K562 (cell line): ENCODE measurements at regions of chr10 and their contacts with region 1.

Region 1: DNA sequence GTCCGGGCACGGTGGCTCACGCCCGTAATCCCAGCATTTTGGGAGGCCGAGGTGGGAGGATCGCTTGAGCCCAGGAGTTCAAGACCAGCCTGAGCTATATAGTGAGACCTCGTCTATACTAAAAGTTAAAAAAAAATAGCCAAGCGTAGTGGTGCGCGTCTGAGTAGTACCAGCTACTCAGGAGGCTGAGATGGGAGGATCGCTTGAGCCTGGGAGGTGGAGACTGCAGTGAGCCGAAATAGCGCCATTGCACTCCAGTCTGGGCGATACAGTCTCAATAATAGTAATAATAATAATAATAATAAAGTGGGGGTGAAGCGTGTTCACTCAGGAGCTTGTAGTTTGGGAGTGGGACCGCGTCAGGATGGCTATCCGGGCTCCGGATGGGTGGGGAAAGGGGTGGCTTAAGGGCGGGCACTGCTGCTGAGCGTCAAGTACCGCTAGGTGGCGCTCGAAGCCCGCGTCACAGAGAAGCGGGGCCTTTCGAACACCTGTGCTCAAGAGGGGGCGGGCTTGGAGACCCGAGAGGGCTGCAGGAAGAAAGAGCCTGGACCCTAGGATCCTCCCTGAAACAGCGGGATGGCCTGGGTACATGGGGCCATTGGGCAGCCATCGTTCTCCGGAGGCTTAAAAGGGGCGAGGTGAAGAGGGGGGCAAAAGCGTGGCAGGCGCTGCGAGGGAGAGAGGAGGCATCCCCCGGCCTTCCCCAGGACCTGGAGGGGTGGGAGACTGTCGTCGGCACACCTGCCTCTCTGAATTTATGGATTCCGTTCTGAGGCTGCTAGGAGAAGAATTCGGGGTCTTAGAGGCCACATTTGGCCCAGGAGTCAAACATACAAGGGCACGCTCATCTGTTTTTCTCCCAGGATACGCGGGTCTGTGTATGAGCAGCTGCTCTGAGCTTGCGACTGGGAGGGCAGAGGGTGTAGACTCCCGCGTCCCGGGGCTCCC is 14.5 kb downstream of the LBX1 start:
- DNase-seq: peak; percentile 66 to 76 (median 74)
- ATAC-seq: peak; percentile 92
- H3K4me3 ChIP-seq: no peak overlapping the region
- H3K27ac ChIP-seq: no peak overlapping the region
- H3K4me1 ChIP-seq: peaks cover 0 to 41% of the 10 kb centered on the region in 2 experiments; a peak in 3 of 5 replicates
- H3K27me3 ChIP-seq: peaks cover 12 to 60% of the 10 kb centered on the region in 2 experiments; a peak in 4 of 5 replicates
- CTCF ChIP-seq: peak; percentile 70 to 86 (median 77)
- EP300 ChIP-seq: no peak
- POLR2A ChIP-seq: no peak
- RAD21 ChIP-seq: peak; percentile 50 to 68

Region 2: GRCh38 chr10:100986952-100987750 is 227.6 kb before region 1 on chr10 and contains the starts of genes MRPL43 and TWNK:
- CTCF ChIA-PET with region 1: no interaction called
- POLR2A ChIA-PET with region 1: no interaction called
- in situ Hi-C with region 1: no loop called
- intact Hi-C with region 1: no loop called
- DNase-seq: peak; percentile 78 to 87 (median 82)
- ATAC-seq: peak; percentile 96
- H3K4me3 ChIP-seq: peak within 1 kb of the TSS; percentile 95
- H3K27ac ChIP-seq: peak within 1 kb of the TSS; percentile 87
- H3K4me1 ChIP-seq: peaks cover 16 to 21% of the 10 kb centered on the region in 2 experiments; a peak in 4 of 5 replicates
- H3K27me3 ChIP-seq: no peaks in the 10 kb centered on the region
- CTCF ChIP-seq: no peak
- EP300 ChIP-seq: no peak
- POLR2A ChIP-seq: peak; percentile 81
- RAD21 ChIP-seq: no peak
- polyA plus RNA-seq, gene MRPL43: 15.1 to 25.6 TPM
- polyA plus RNA-seq, gene TWNK: 11.6 to 14.8 TPM

Region 3: DNA sequence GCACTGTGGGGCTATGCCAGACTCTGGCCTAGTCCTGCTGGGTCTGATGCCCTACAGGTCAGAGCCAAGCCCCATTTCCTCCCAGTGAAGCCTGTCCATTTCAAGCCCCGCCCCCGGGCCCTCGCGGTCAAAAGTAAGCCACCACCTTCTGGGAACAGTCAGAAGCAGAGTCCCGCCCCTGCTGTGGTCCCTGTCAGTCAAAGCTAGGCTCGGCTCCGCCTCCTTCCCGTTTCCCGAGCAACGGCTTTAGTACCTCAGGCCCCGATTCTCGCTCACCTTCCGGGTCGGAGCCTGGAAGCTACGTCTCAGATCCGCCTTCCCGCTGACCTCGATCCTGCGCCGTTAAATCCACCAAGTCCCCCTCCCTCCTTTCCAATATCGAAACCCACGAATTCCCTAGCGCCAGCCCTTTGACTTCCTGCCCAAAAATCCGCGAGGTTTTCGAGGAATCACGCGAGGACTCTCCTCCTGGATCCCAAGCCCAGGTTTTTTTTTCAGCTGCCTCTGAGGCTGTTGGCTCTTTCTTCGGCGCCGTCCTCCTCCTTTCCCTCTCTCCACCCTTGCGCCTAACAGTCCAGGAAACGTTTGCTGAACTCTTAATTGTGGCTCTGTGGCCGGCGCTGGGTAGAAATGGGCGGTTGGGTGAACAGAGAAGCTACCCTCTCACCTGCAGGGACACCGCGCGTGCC is 171.9 kb before region 1 on chr10:
- CTCF ChIA-PET with region 1: no interaction called
- POLR2A ChIA-PET with region 1: no interaction called
- in situ Hi-C with region 1: no loop called
- intact Hi-C with region 1: loop called (anchors 2 kb)
- DNase-seq: peak; percentile 89 to 96 (median 92)
- ATAC-seq: peak; percentile 98
- H3K4me3 ChIP-seq: peak overlapping the region; percentile 44
- H3K27ac ChIP-seq: peak overlapping the region; percentile 80
- H3K4me1 ChIP-seq: peaks cover 13 to 21% of the 10 kb centered on the region in 2 experiments
- H3K27me3 ChIP-seq: no peaks in the 10 kb centered on the region
- CTCF ChIP-seq: no peak
- EP300 ChIP-seq: no peak
- POLR2A ChIP-seq: peak; percentile 82
- RAD21 ChIP-seq: no peak

Region 4: GRCh38 chr10:101291331-101292193 is 76.8 kb after region 1 on chr10:
- CTCF ChIA-PET with region 1: interaction called, 8 read pairs
- POLR2A ChIA-PET with region 1: no interaction called
- in situ Hi-C with region 1: no loop called
- intact Hi-C with region 1: loop called (anchors 1 kb)
- DNase-seq: peak; percentile 67 to 78 (median 76)
- ATAC-seq: peak; percentile 92
- H3K4me3 ChIP-seq: peak overlapping the region; percentile 36
- H3K27ac ChIP-seq: no peak overlapping the region
- H3K4me1 ChIP-seq: peaks cover 0 to 17% of the 10 kb centered on the region in 2 experiments; a peak in 3 of 5 replicates
- H3K27me3 ChIP-seq: peaks cover 0 to 42% of the 10 kb centered on the region in 2 experiments; a peak in 3 of 5 replicates
- CTCF ChIP-seq: peak; percentile 58 to 83 (median 65)
- EP300 ChIP-seq: no peak
- POLR2A ChIP-seq: no peak
- RAD21 ChIP-seq: peak; percentile 18 to 60; a peak in 2 of 4 replicates

Region 5: DNA sequence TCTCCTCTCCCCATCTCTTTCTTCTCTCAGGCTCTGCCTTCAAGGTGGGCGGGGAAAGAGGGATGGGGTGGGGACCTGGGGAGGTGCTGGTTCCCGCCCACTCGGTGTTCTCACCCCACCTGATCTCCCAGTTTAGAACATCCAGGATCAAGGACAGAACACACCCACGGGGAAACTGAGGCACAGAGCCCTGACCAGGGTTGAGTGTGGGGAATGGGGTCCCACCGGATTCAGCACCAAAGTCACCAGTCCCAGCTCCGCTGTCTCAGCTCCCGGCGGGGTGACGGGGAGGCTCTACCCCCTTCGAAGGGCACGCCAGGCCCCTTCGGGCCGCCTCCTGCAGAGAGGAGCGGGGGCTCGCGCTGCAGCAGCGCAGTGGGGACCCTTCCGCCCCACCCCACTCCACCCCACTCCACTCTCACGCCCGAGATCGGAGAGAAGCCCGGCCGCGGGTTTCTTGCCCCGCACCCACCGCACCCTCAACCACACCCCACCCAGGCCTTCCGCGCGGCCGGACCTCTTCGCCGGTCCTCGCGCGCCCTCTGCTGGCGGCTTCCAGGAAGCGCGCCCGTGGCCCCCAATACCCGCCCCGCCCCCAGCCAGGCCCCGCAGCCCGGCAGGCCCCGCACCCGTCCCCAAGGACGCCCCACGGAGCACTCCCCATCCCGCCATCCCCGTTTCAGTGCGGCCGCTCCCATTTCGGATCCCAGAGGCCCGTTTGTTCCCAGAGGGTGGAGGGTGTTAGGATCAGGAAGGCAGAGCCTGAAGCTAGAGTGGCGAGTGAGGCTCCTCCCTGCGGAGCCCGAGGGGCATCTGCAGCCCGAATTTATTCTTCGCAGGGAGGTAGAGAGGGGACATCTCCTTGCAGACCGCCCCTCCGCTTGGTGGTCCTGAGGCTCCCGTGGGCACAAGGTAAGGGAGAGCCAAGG is 355.4 kb after region 1 on chr10:
- CTCF ChIA-PET with region 1: interaction called, 8 read pairs
- POLR2A ChIA-PET with region 1: no interaction called
- in situ Hi-C with region 1: loop called (anchors 5 kb)
- intact Hi-C with region 1: loop called (anchors 5 kb)
- DNase-seq: peak; percentile 77 to 88 (median 86)
- ATAC-seq: peak; percentile 88
- H3K4me3 ChIP-seq: peak overlapping the region; percentile 54
- H3K27ac ChIP-seq: no peak overlapping the region; the same call in 2 of the 3 replicates
- H3K4me1 ChIP-seq: peaks cover 20 to 48% of the 10 kb centered on the region in 2 experiments
- H3K27me3 ChIP-seq: no peaks in the 10 kb centered on the region
- CTCF ChIP-seq: peak; percentile 34 to 78 (median 60); a peak in 5 of 6 replicates
- EP300 ChIP-seq: no peak
- POLR2A ChIP-seq: no peak
- RAD21 ChIP-seq: peak; percentile 64 to 69

Region 6: DNA sequence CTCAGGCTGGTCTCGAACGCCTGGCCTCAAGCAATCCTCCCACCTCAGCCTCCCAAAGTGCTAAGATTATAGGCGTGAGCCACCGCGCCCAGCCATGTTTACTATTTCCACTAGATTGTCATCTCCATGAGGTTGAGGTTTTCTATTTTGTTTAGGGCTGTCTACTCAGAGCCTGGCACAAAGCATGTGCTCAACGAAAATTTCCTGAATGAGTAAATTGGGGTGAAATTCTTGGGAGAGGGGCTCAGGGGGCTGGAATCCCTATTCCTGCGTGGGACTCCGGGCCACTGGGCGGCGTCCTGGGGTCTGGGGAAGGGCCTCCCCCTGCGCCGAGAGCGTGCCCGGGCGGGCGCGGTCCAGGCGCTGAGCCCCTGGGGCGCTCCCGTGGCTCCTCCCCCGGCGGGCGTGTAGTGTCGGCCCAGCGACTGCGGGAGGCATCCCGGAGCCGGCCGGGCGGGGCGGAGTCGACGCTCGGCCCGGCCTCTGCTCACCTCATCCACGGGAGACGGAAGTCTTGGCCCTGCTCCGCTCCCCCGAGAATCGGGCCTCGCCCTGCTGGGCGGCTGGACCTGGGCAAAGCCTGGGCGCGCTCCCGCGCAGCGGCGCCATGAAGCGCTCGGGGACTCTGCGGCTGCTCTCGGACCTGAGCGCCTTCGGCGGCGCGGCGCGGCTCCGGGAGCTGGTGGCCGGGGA is 850.3 kb after region 1 on chr10 and contains the start of gene HPS6:
- CTCF ChIA-PET with region 1: no interaction called
- POLR2A ChIA-PET with region 1: no interaction called
- in situ Hi-C with region 1: no loop called
- intact Hi-C with region 1: loop called (anchors 5 kb)
- DNase-seq: peak; percentile 88 to 90 (median 89)
- ATAC-seq: peak; percentile 97
- H3K4me3 ChIP-seq: peak within 1 kb of the TSS; percentile 92
- H3K27ac ChIP-seq: peak within 1 kb of the TSS; percentile 76
- H3K4me1 ChIP-seq: peaks cover 25 to 38% of the 10 kb centered on the region in 2 experiments; a peak in 4 of 5 replicates
- H3K27me3 ChIP-seq: no peaks in the 10 kb centered on the region
- CTCF ChIP-seq: 0 out of 6 replicates have a peak, but pooled peaks of 1 of the 3 experiments have one; percentile 1
- EP300 ChIP-seq: no peak
- POLR2A ChIP-seq: peak; percentile 70
- RAD21 ChIP-seq: no peak
- polyA plus RNA-seq, gene HPS6: 0.45 to 0.55 TPM